Activated CD4-positive, alpha-beta memory T cell treated with anti-CD3 and anti-CD28 coated beads for 36 hours (primary cell): ENCODE measurements at regions of chr11 and their contacts with region 1.

Region 1: DNA sequence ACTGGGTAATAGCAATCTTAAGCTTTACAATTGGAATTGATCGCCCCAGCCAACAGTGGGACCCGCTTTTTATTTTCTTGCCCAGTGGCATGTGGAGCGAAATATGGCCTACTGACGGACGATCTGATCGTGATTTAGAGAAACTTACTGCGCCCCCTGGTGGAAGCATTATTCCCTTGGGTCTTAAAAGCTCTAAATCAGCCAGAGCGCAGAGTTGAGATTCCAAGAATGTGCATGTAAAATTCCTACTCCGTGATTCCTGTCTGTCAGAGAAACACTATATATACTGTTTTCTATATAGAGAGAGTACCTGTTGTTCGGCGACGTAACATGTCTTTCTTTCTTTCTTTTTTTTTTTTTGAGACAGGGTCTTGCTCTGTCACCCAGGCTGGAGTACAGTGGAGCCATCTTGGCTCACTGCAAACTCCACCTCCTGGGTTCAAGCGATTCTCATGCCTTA is 3.7 kb upstream of the DPF2 start:
- DNase-seq: peak; percentile 88
- H3K4me3 Mint-ChIP-seq: no peak overlapping the region
- H3K27ac Mint-ChIP-seq: no peak overlapping the region
- H3K4me1 Mint-ChIP-seq: peaks cover 12% of the 10 kb centered on the region
- H3K27me3 Mint-ChIP-seq: peaks cover 3% of the 10 kb centered on the region

Region 2: GRCh38 chr11:65204646-65205601 is 125.0 kb before region 1 on chr11:
- CTCF ChIA-PET with region 1: interaction called, 12 read pairs
- POLR2A ChIA-PET with region 1: no interaction called
- intact Hi-C with region 1: no loop called
- DNase-seq: peak; percentile 58
- H3K4me3 Mint-ChIP-seq: no peak overlapping the region
- H3K27ac Mint-ChIP-seq: no peak overlapping the region
- H3K4me1 Mint-ChIP-seq: peaks cover 3% of the 10 kb centered on the region
- H3K27me3 Mint-ChIP-seq: no peaks in the 10 kb centered on the region

Region 3: DNA sequence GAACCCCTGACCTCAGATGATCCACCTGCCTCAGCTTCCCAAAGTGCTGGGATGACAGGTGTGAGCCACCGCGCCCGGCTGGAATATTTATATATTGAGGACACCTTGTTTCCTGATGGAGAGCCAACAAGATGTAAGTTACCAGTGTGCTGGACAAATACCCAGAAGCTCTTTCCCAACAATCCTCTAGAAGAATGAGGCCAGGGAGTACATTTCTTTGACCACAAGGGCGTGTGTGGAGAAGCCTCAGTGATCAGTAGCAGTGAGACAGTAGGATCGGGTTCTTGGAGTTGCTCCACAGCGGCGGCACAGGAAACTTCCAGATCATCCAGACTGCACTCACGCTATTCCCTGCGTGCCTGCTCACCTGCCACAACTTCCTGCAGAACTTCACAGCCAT is 78.5 kb before region 1 on chr11:
- CTCF ChIA-PET with region 1: interaction called, 10 read pairs
- POLR2A ChIA-PET with region 1: no interaction called
- intact Hi-C with region 1: no loop called
- DNase-seq: no peak
- H3K4me3 Mint-ChIP-seq: no peak overlapping the region
- H3K27ac Mint-ChIP-seq: no peak overlapping the region
- H3K4me1 Mint-ChIP-seq: peaks cover 2% of the 10 kb centered on the region
- H3K27me3 Mint-ChIP-seq: peaks cover 5% of the 10 kb centered on the region

Region 4: DNA sequence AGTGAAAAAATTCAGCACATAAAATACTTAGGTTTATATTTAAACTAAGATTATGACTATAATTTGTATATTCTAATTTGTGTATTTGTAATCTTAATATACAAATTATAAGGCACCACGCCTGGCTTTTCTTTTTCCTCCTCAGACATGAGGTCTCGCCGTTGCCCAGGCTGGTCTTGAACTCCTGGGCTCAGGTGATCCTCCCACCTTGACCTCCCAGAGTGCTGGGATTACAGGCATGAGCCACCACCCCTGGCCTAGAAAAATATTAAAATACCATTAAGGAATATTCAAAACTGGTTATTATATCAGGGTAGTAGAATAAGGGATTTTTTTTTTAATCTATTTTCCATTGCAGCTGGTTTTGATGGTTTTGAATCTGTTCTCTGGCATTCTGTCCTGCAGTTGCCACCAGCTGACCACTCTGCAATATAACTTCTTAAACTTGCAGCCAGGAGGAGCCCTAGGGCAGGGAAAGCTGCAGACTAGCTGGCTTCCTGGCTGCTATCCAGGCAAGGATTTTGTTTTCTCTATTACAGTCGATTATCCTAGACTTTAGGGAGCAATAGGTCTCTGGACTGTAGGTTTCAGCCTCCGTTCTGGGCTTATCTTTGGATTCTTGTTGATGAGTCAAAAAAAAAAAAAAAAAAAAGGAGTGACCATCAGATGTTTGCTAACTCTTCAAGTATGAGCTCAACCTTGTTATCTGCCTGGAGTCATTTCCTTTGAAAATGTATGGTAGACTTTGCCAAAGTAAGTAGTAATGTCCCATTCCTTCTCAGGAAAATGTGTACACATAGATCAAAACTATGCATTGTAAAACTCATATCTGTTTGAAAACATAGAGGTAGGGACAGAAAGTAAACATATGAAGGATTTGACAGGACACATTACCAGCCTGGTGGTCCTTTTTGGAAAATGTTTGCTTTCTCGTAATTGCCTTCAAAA is 55.0 kb before region 1 on chr11:
- CTCF ChIA-PET with region 1: interaction called, 35 read pairs
- POLR2A ChIA-PET with region 1: interaction called, 3 read pairs
- intact Hi-C with region 1: loop called (anchors 5 kb)
- DNase-seq: peak; percentile 45
- H3K4me3 Mint-ChIP-seq: no peak overlapping the region
- H3K27ac Mint-ChIP-seq: no peak overlapping the region
- H3K4me1 Mint-ChIP-seq: peaks cover 19% of the 10 kb centered on the region
- H3K27me3 Mint-ChIP-seq: no peaks in the 10 kb centered on the region

Region 5: GRCh38 chr11:65340226-65340625 is 10.3 kb after region 1 on chr11:
- CTCF ChIA-PET with region 1: interaction called, 18 read pairs
- POLR2A ChIA-PET with region 1: no interaction called
- intact Hi-C with region 1: no loop called
- DNase-seq: no peak
- H3K4me3 Mint-ChIP-seq: no peak overlapping the region
- H3K27ac Mint-ChIP-seq: no peak overlapping the region
- H3K4me1 Mint-ChIP-seq: peaks cover 29% of the 10 kb centered on the region
- H3K27me3 Mint-ChIP-seq: no peaks in the 10 kb centered on the region

Region 6: GRCh38 chr11:65382033-65382807 is 52.2 kb after region 1 on chr11 and contains the start of gene SLC25A45:
- CTCF ChIA-PET with region 1: interaction called, 10 read pairs
- POLR2A ChIA-PET with region 1: interaction called, 3 read pairs
- intact Hi-C with region 1: loop called (anchors 1 kb)
- DNase-seq: peak; percentile 97
- H3K4me3 Mint-ChIP-seq: peak within 1 kb of the TSS; percentile 85
- H3K27ac Mint-ChIP-seq: peak within 1 kb of the TSS; percentile 97
- H3K4me1 Mint-ChIP-seq: peaks cover 41% of the 10 kb centered on the region
- H3K27me3 Mint-ChIP-seq: no peaks in the 10 kb centered on the region
- total RNA-seq, gene SLC25A45: 14.4 to 16.1 TPM

Region 7: DNA sequence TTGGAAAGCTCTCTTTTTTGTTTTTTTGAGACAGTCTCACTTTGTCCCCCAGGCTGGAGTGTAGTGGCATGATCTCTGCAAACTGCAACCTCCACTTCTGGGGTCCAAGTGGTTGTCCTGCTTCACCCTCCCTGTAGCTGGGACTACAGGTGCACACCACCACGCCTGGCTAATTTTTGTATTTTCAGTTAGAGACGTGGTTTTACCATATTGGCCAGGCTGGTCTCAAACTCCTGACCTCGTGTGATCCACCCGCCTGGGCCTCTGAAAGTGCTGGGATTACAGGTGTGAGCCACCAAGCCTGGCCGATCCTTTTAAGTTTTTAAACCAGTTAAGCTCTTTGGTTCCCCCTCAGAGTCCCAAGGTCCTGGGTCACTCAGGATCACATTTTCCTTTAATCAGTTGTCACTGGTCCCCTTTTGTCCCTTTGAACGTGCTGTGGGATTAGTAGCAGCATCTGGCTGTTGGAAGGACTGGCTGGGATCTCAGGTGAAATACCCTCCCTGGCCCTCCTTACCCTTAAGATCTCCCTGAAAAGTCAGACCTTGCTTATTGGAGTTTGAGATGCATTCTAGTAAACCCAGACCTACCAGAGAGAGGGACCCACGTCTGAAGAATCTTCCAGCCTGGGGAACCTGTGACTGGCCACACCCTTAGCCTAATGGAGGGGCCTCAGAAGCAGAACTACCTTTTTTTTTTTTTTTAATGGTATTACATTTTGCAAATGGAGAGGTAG is 177.0 kb after region 1 on chr11:
- CTCF ChIA-PET with region 1: interaction called, 3 read pairs
- POLR2A ChIA-PET with region 1: interaction called, 13 read pairs
- intact Hi-C with region 1: no loop called
- DNase-seq: peak; percentile 69
- H3K4me3 Mint-ChIP-seq: no peak overlapping the region
- H3K27ac Mint-ChIP-seq: no peak overlapping the region
- H3K4me1 Mint-ChIP-seq: peaks cover 44% of the 10 kb centered on the region
- H3K27me3 Mint-ChIP-seq: peaks cover 4% of the 10 kb centered on the region

Region 8: DNA sequence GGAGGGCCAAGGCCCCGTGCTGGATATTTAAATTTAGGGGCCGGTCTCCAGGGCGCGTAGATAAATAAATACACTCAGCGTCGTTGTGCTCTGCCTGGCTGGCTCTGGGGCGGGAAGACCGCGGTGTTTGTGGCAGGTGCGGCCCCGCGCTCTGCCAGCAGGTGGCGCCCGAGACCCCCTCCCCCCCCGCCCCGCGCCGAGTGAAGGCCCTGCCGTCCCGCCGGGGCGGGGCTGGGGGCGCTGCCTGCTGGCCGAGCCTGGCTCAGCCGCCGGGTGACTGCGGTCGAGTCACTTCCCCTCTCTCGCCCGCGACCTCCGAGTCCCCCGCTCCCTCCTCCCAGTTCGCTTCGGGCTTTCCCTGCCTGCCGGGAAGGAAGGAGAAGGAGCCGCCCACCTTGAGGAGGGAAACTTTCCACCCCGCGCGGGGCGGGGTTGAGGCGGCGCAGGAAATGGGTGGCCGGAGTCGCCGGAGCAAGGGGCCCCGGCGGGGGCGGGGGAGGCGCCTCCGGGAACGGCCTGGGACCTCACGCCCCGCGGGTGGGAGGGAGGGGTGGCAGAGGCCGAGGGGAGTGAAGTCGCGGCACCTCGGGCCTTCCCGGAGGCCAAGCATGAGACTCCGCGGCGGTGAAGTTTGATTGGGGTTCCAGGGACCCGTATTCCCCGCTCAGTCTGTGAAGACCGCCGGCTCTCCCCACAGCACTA is 244.3 kb after region 1 on chr11:
- CTCF ChIA-PET with region 1: no interaction called
- POLR2A ChIA-PET with region 1: no interaction called
- intact Hi-C with region 1: no loop called
- DNase-seq: peak; percentile 96
- H3K4me3 Mint-ChIP-seq: peak overlapping the region; percentile 90
- H3K27ac Mint-ChIP-seq: peak overlapping the region; percentile 93
- H3K4me1 Mint-ChIP-seq: peaks cover 50% of the 10 kb centered on the region
- H3K27me3 Mint-ChIP-seq: no peaks in the 10 kb centered on the region